ENCODE measurements at regions of chr13 and their contacts with region 1.

Region 1: DNA sequence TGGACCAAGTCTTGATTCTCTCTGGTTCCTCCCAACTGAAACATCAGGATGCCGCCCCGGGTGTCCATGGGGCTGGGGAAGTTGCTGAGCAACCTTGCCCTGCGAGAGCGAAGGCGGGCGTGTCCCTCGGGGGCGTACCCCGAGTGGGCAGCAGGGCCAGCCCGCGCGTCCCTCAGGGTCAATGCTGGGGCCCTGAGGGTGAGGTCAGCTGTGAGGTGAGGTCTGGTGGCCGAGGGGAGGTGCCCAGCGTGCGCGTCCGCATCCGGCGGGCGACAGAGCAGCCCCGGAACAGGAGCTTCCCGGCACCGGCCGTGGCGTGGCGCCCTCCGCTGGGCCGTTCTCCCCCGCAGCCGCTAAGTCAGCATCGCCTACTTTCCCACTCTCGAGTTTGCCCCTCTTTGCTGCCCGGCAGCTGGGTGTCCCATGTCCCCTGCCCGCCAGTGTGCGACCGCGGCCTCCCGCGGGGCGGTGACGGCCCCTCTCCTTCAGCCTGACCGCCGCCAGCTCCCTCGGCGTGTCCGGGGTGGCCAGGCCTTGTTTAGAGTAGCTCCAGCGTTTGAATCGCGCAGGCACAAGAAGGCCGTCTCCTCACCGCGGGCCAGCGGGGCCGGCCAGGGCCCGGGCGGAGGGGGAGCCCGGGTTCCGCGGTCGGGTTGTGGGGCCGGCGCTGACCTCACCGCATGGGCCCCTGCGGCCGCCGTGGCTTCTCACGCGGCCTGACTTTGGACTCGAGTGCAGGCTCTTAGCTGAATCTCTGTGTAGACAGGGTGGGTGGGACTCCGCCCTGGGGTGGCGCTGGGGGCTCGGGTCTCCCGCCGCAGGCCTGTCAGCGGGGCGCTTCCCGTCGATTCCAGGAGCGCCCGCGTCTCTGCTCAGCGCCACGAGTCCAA is 33.0 kb downstream of the GJA3 start:
- DNase-seq: peak in 4 of 5 donors; percentile 32 to 48 (median 38)
- H3K4me3 ChIP-seq: peak overlapping the region; percentile 42 to 52
- H3K4me3 Mint-ChIP-seq: peak overlapping the region; percentile 64 to 83 (median 72)
- H3K27ac ChIP-seq: no peak overlapping the region
- H3K27ac Mint-ChIP-seq: peak overlapping the region in 1 of 7 donors; percentile 63
- H3K4me1 ChIP-seq: peaks cover 8% of the 10 kb centered on the region
- H3K4me1 Mint-ChIP-seq: peaks cover 0 to 6% (median 1%) of the 10 kb centered on the region in 4 donors
- H3K27me3 ChIP-seq: peaks cover 15% of the 10 kb centered on the region
- H3K27me3 Mint-ChIP-seq: peaks cover 6 to 19% of the 10 kb centered on the region in 2 donors

Region 2: DNA sequence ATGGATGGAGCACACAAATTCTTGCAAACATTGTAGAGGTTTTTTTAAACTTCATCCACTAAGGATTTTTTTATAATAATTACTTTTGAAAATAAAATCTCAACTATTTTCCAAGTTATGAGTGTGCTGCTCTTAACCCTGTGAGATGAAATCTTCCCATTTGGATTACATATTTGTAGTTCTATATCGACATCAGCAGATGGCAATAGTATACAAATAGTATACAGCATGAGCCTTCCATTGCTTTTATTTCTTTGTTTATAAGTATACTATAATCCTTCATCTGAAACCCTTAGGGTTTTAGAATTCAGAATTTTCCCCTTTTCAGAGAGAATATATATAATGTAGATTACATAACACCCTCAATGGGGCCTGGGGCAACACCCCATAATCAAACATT is 37.5 kb before region 1 on chr13:
- CTCF ChIA-PET with region 1: interaction called, 12 read pairs
- POLR2A ChIA-PET with region 1: no interaction called
- intact Hi-C with region 1: no loop called
- DNase-seq: peak in 1 of 5 donors; percentile 9
- H3K4me3 ChIP-seq: no peak overlapping the region
- H3K4me3 Mint-ChIP-seq: no peak overlapping the region
- H3K27ac ChIP-seq: no peak overlapping the region
- H3K27ac Mint-ChIP-seq: no peak overlapping the region
- H3K4me1 ChIP-seq: no peaks in the 10 kb centered on the region
- H3K4me1 Mint-ChIP-seq: no peaks in the 10 kb centered on the region
- H3K27me3 ChIP-seq: no peaks in the 10 kb centered on the region
- H3K27me3 Mint-ChIP-seq: no peaks in the 10 kb centered on the region

Region 3: GRCh38 chr13:20101484-20102316 is 26.1 kb before region 1 on chr13:
- CTCF ChIA-PET with region 1: interaction called, 11 read pairs
- POLR2A ChIA-PET with region 1: interaction called, 4 read pairs
- intact Hi-C with region 1: no loop called
- DNase-seq: no peak
- H3K4me3 ChIP-seq: no peak overlapping the region
- H3K4me3 Mint-ChIP-seq: no peak overlapping the region
- H3K27ac ChIP-seq: no peak overlapping the region
- H3K27ac Mint-ChIP-seq: no peak overlapping the region
- H3K4me1 ChIP-seq: no peaks in the 10 kb centered on the region
- H3K4me1 Mint-ChIP-seq: peaks cover 0 to 1% (median 0%) of the 10 kb centered on the region in 4 donors
- H3K27me3 ChIP-seq: peaks cover 8% of the 10 kb centered on the region
- H3K27me3 Mint-ChIP-seq: peaks cover 36 to 45% of the 10 kb centered on the region in 2 donors

Measured in CD4-positive, alpha-beta memory T cell (primary cell).